ENCODE measurements at regions of chr3 and their contacts with region 1.

Region 1: DNA sequence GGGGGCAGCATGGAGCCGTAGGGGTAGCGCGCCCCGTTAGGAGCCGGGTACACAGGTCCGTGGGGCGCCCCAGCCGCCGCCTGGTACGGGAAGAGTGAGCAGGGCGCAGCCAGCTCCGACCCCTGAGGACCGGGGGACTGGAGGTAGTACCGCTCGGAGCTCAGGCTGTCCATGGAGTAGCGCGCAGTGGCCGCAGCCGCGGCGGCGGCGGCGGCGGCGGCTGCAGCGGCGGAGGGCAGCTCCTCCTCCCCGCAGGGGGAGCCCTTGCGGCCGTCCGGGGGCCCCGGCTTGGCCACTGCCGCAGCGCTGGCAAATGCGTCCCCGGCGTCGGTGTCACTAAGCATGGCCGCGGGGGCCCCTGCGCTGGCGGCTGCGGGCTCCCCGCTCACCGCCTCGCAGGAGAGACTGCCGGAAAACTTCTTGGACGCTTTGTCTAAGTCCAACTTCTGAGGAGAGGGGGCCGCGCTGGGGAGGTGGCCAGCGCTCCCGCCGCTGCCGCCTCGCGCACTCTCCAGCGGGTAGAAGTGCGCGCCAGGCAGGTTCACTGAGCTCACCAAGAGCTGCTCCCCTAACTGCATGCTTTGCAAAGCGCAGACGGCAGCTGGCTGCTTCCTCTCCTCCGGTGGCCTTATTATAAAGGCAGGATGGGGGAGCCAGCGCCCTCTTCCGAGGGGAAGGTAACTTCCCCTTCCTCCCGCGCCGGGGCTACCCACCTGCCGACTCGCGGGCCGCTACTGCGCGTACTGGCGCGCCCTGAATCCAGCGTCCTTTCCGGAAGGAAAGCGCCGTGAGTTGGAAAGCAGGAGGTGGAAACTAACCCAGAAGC is at the start of gene EOMES:
- DNase-seq: peak; percentile 57 to 81 (median 71)
- ATAC-seq: peak; percentile 84
- H3K4me3 ChIP-seq: peak within 1 kb of the TSS; percentile 68
- H3K4me3 Mint-ChIP-seq: peak within 1 kb of the TSS; percentile 79 to 93 (median 86)
- H3K27ac ChIP-seq: no peak within 1 kb of the TSS
- H3K27ac Mint-ChIP-seq: peak within 1 kb of the TSS in 3 of 9 donors; percentile 8 to 74 (median 56)
- H3K4me1 ChIP-seq: peaks cover 16 to 30% of the 10 kb centered on the region in 2 donors
- H3K4me1 Mint-ChIP-seq: peaks cover 19 to 42% (median 31%) of the 10 kb centered on the region in 7 donors
- H3K27me3 ChIP-seq: peaks cover 0 to 41% of the 10 kb centered on the region in 2 donors
- H3K27me3 Mint-ChIP-seq: peaks cover 44 to 89% (median 63%) of the 10 kb centered on the region in 5 donors
- total RNA-seq, gene EOMES: 0.67 to 9.5 (median 1.4) TPM

Region 2: DNA sequence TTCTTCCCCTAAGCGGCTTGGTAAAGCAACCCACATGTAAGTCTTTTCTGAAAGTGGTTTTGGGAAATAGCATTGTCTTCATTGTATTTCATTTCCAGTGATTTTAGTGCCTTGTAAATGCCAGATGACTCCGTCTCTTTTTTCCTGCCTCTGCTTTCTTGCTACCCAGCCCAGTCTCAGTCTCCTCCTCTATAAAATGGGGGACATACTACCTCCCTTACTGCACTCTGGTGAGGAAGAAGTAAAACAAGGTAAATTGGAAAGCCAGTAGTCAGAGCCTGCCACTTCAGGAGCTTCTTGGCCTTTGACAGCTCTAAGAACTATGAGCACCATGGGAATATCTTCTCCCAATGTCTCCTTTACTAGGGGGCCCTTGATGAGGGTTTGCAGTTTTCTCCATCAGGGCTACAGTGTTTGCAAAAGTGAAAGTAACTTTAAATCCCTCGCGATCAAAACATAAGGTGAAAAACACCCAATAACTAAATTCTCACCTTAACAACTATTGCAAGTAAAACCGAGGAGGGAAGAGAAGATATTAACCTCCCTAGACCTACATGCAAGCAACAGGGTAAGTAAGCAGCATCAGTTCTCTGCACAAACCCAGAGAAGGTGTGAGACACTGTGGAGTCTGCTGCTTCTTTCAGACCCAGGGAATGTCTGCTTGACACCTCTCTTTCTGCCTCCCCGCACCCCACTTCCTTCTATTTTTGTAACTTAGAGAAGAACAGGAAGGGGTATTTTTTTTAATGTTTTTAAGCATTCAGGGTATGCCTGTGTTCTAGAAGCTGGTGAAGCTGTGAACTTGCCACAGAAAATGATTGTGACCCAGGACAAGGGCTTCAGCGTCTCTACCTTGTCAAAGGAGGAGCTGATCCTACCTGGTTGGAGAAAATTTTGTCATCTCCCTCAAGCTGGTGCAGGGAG is 159.3 kb after region 1 on chr3:
- CTCF ChIA-PET with region 1: interaction called, 4 read pairs
- POLR2A ChIA-PET with region 1: interaction called, 7 read pairs
- intact Hi-C with region 1: loop called (anchors 1 to 2 kb)
- DNase-seq: peak in 8 of 9 donors; percentile 24 to 75 (median 62)
- ATAC-seq: peak; percentile 87
- H3K4me3 ChIP-seq: peak overlapping the region; percentile 43
- H3K4me3 Mint-ChIP-seq: peak overlapping the region; percentile 82 to 94 (median 89)
- H3K27ac ChIP-seq: peak overlapping the region; percentile 75
- H3K27ac Mint-ChIP-seq: peak overlapping the region; percentile 91 to 99 (median 97)
- H3K4me1 ChIP-seq: peaks cover 28 to 47% of the 10 kb centered on the region in 2 donors
- H3K4me1 Mint-ChIP-seq: peaks cover 39 to 85% (median 73%) of the 10 kb centered on the region in 7 donors
- H3K27me3 ChIP-seq: no peaks in the 10 kb centered on the region
- H3K27me3 Mint-ChIP-seq: peaks cover 0 to 4% (median 0%) of the 10 kb centered on the region in 5 donors

Region 3: DNA sequence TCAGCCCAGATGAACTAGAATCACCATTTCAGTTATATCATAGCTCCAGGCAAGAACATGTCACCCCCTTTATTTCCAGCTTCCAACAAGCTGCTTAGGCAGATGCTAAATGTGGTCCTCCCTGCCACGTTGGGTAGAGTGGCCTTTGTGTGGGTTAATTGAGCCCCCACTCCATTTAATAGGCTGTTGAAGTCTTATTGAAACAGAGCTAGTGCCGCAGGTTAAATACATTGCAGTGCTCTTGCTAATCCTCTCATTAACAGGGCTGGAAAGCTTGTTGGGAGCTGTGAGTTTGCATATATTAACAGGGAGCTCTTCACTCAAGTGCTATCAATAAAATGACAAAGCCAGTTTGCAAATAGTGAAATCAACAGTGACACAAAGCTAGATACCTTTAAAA is 271.1 kb after region 1 on chr3:
- CTCF ChIA-PET with region 1: no interaction called
- POLR2A ChIA-PET with region 1: no interaction called
- intact Hi-C with region 1: loop called in 1 of 2 experiments (anchors 1 kb)
- DNase-seq: no peak
- ATAC-seq: no peak
- H3K4me3 ChIP-seq: no peak overlapping the region
- H3K4me3 Mint-ChIP-seq: no peak overlapping the region
- H3K27ac ChIP-seq: no peak overlapping the region
- H3K27ac Mint-ChIP-seq: no peak overlapping the region
- H3K4me1 ChIP-seq: no peaks in the 10 kb centered on the region
- H3K4me1 Mint-ChIP-seq: peaks cover 0 to 5% (median 0%) of the 10 kb centered on the region in 7 donors
- H3K27me3 ChIP-seq: no peaks in the 10 kb centered on the region
- H3K27me3 Mint-ChIP-seq: no peaks in the 10 kb centered on the region

Region 4: DNA sequence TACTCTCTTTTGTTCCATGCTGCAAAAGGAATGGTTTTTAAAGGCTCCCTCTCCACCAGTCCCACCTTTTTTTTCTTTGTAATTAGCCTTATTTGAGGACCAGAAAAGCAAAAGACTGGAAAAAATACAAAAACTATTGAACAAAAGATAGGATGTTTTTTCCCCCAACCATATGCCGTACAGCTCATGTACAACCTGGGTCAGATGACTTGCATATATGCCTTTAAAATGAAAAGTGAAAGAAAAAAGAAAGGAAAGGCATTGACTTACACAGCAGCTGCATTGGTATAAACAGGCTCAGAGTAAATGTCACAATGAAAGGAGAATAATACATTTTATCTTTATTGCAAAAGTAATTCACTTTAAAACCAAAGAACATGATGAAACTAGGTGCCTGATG is 450.0 kb after region 1 on chr3:
- CTCF ChIA-PET with region 1: no interaction called
- POLR2A ChIA-PET with region 1: no interaction called
- intact Hi-C with region 1: loop called (anchors 5 kb)
- DNase-seq: peak in 6 of 9 donors; percentile 12 to 53 (median 36)
- ATAC-seq: peak; percentile 67
- H3K4me3 ChIP-seq: peak overlapping the region; percentile 21
- H3K4me3 Mint-ChIP-seq: peak overlapping the region in 9 of 10 donors; percentile 63 to 85 (median 80)
- H3K27ac ChIP-seq: no peak overlapping the region
- H3K27ac Mint-ChIP-seq: peak overlapping the region; percentile 11 to 91 (median 77)
- H3K4me1 ChIP-seq: peaks cover 5 to 9% of the 10 kb centered on the region in 2 donors
- H3K4me1 Mint-ChIP-seq: peaks cover 6 to 24% (median 18%) of the 10 kb centered on the region in 7 donors
- H3K27me3 ChIP-seq: no peaks in the 10 kb centered on the region
- H3K27me3 Mint-ChIP-seq: no peaks in the 10 kb centered on the region

Region 5: GRCh38 chr3:28286595-28286994 is 564.7 kb after region 1 on chr3:
- CTCF ChIA-PET with region 1: interaction called, 6 read pairs
- POLR2A ChIA-PET with region 1: interaction called, 3 read pairs
- intact Hi-C with region 1: loop called (anchors 1 kb)
- DNase-seq: peak in 6 of 9 donors; percentile 12 to 48 (median 36)
- ATAC-seq: peak; percentile 85
- H3K4me3 ChIP-seq: no peak overlapping the region
- H3K4me3 Mint-ChIP-seq: peak overlapping the region in 1 of 10 donors; percentile 66
- H3K27ac ChIP-seq: no peak overlapping the region
- H3K27ac Mint-ChIP-seq: no peak overlapping the region
- H3K4me1 ChIP-seq: peaks cover 0 to 10% of the 10 kb centered on the region in 2 donors
- H3K4me1 Mint-ChIP-seq: peaks cover 2 to 27% (median 13%) of the 10 kb centered on the region in 7 donors
- H3K27me3 ChIP-seq: no peaks in the 10 kb centered on the region
- H3K27me3 Mint-ChIP-seq: no peaks in the 10 kb centered on the region